ENCODE measurements at regions of chr9 and their contacts with region 1.

Region 1: GRCh38 chr9:35481347-35481975 is 8.4 kb upstream of the RUSC2 start:
- DNase-seq: no peak
- ATAC-seq: peak; percentile 70

Region 2: GRCh38 chr9:35559792-35560530 is 78.5 kb after region 1 on chr9:
- intact Hi-C with region 1: loop called (anchors 5 kb)
- DNase-seq: no peak
- ATAC-seq: no peak